Heart right ventricle (tissue), 16 donors: ENCODE measurements at regions of chr7 and their contacts with region 1.

Region 1: GRCh38 chr7:81499262-81500116 is 270.4 kb downstream of the HGF start:
- DNase-seq: peak in 1 of 2 donors; percentile 45
- ATAC-seq: peak; percentile 59 to 87 (median 81)
- H3K4me3 ChIP-seq: no peak overlapping the region
- H3K27ac ChIP-seq: peak overlapping the region in 4 of 10 donors; percentile 16 to 57 (median 38)
- H3K4me1 ChIP-seq: peaks cover 0 to 16% (median 12%) of the 10 kb centered on the region in 9 donors
- H3K27me3 ChIP-seq: no peaks in the 10 kb centered on the region
- CTCF ChIP-seq: peak; percentile 19 to 79 (median 60)

Region 2: GRCh38 chr7:81549484-81550016 is 50.1 kb after region 1 on chr7:
- intact Hi-C with region 1: loop called in 1 of 10 experiments (anchors 10 kb)
- DNase-seq: no peak
- ATAC-seq: no peak
- H3K4me3 ChIP-seq: no peak overlapping the region
- H3K27ac ChIP-seq: no peak overlapping the region
- H3K4me1 ChIP-seq: no peaks in the 10 kb centered on the region
- H3K27me3 ChIP-seq: no peaks in the 10 kb centered on the region
- CTCF ChIP-seq: no peak

Region 3: GRCh38 chr7:81725812-81726127 is 226.3 kb after region 1 on chr7:
- intact Hi-C with region 1: loop called in 1 of 10 experiments (anchors 10 kb)
- DNase-seq: peak in 1 of 2 donors; percentile 8
- ATAC-seq: peak in 3 of 8 donors; percentile 57 to 70 (median 58)
- H3K4me3 ChIP-seq: no peak overlapping the region
- H3K27ac ChIP-seq: no peak overlapping the region
- H3K4me1 ChIP-seq: peaks cover 0 to 3% (median 0%) of the 10 kb centered on the region in 9 donors
- H3K27me3 ChIP-seq: no peaks in the 10 kb centered on the region
- CTCF ChIP-seq: no peak

Region 4: GRCh38 chr7:81956520-81956919 is 457.0 kb after region 1 on chr7:
- intact Hi-C with region 1: loop called (anchors 2 to 10 kb)
- DNase-seq: peak in 1 of 2 donors; percentile 13
- ATAC-seq: peak; percentile 53 to 90 (median 82)
- H3K4me3 ChIP-seq: no peak overlapping the region
- H3K27ac ChIP-seq: no peak overlapping the region
- H3K4me1 ChIP-seq: peaks cover 0 to 33% (median 16%) of the 10 kb centered on the region in 9 donors
- H3K27me3 ChIP-seq: no peaks in the 10 kb centered on the region
- CTCF ChIP-seq: peak in 8 of 9 donors; percentile 22 to 60 (median 54)

Region 5: GRCh38 chr7:82017334-82017943 is 518.0 kb after region 1 on chr7:
- intact Hi-C with region 1: loop called in 5 of 10 experiments (anchors 5 kb)
- DNase-seq: no peak
- ATAC-seq: peak in 2 of 8 donors; percentile 7 to 50
- H3K4me3 ChIP-seq: no peak overlapping the region
- H3K27ac ChIP-seq: no peak overlapping the region
- H3K4me1 ChIP-seq: peaks cover 0 to 30% (median 3%) of the 10 kb centered on the region in 9 donors
- H3K27me3 ChIP-seq: no peaks in the 10 kb centered on the region
- CTCF ChIP-seq: peak in 7 of 9 donors; percentile 34 to 62 (median 53)

Region 6: DNA sequence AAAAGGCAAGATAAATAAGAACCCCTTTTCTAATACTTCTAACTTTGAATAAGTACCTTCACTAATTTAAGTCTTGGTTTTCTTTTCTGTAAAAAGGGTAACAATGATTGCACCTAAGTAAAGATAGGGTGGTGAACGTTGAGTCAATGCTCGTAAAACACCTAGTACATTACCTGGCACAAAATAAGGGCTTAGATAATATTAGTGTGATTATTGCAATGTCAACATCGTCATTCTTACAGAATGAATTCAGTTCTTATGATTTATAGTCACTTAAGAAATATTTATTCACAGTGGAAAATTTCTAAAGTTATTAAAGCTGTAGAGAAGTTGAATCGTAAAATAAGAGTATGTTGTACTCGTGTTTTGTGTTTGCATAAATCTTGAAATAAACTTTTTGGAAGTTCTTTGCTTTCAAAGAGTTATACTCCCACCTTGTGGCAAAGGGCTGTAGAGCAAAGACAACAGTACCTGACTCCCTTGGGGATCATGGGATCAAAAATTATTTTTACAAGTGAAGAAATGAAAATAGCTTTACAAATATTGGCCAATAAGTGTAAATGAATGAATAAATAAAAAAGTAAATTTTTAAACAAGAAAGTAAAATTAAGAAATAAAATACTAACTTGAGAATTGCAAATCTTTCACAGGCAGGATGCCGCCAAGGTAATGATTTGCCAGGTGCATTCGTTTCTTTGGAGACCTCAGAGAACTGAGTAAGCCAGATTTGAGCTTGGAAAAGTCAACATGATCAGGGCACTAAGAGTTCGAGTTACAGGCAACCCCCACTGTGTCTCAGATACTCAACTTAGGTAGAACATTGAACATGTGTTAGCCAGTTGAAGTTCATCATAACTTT is 1229.9 kb after region 1 on chr7:
- intact Hi-C with region 1: loop called in 5 of 10 experiments (anchors 5 to 10 kb)
- DNase-seq: no peak
- ATAC-seq: no peak
- H3K4me3 ChIP-seq: no peak overlapping the region
- H3K27ac ChIP-seq: no peak overlapping the region
- H3K4me1 ChIP-seq: no peaks in the 10 kb centered on the region
- H3K27me3 ChIP-seq: no peaks in the 10 kb centered on the region
- CTCF ChIP-seq: peak in 8 of 9 donors; percentile 20 to 61 (median 53)